ENCODE measurements at regions of chr16 and their contacts with region 1.

Region 1: DNA sequence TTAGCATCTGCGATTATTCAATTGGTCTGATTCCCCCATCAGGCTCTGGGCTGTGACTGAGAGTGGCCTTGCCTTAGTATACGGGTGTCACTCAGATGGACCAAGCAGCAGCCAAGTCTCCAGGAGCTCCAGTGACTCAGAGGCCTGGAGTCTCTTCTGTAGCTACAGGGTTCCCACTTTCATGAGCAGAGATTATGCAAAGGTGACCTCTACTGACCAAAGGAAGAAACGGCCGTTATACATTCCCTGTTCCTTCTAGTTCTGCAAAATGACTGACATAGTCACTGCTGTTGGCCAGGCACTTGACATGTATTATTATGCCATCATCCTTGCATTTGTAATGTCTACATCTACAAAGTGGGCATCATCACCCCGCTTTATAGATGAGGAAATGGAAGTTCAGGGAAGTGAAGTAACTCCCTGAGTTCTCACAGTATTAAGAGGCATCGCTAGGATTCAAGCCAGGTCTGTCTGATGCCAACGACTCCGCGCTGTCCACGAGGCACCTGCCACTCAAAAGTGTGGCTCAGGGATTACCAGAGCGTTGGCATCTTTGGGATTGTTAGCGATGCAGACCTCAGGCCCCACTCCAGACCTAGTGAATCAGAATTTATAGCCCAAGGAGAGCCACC is 23.3 kb downstream of the SLC38A7 start:
- DNase-seq: peak; percentile 85
- ATAC-seq: peak; percentile 99
- H3K4me3 ChIP-seq: no peak overlapping the region
- H3K27ac ChIP-seq: no peak overlapping the region
- H3K4me1 ChIP-seq: no peaks in the 10 kb centered on the region
- H3K27me3 ChIP-seq: no peaks in the 10 kb centered on the region
- CTCF ChIP-seq: peak; percentile 74

Region 2: GRCh38 chr16:58336332-58337089 is 324.8 kb before region 1 on chr16:
- CTCF ChIA-PET with region 1: no interaction called
- POLR2A ChIA-PET with region 1: no interaction called
- intact Hi-C with region 1: loop called (anchors 10 kb)
- DNase-seq: peak; percentile 87
- ATAC-seq: peak; percentile 90
- H3K4me3 ChIP-seq: peak overlapping the region; percentile 61
- H3K27ac ChIP-seq: no peak overlapping the region
- H3K4me1 ChIP-seq: peaks cover 5% of the 10 kb centered on the region
- H3K27me3 ChIP-seq: no peaks in the 10 kb centered on the region
- CTCF ChIP-seq: peak; percentile 85

Region 3: DNA sequence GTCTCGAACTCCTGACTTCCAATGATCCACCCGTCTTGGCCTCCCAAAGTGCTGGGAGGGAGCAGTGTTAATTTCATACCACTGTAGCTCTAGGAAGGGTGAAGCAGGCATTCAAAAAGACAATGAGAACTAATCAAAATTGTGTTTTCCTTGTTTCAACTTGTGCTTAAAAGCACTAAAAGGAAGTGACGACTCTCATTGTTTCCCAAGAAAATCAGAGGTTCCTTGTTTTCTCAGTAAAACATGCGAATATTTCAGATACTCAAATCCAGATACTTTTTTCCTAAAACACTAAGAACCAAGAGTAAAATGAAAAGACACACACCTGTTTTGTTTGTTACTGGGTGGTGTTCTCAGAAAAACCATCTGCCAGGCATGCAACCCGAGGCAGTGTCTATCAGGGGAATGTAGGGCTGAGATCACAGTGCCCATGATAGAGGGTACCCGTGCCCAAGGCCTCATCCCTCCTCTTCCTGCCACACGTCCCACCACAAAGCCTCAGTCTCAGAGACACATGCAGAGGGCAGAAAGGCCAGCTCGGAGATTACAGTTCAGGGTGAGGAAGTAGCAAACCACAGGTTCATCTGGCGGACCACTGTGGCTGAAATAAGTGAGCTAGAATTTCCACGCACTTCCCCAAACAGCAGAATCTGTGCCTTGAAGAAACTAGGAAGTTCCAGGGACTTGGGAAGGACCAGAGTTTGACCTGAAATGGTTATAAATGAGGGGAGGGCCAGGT is 235.4 kb before region 1 on chr16:
- CTCF ChIA-PET with region 1: interaction called, 13 read pairs
- POLR2A ChIA-PET with region 1: no interaction called
- intact Hi-C with region 1: no loop called
- DNase-seq: no peak
- ATAC-seq: no peak
- H3K4me3 ChIP-seq: no peak overlapping the region
- H3K27ac ChIP-seq: no peak overlapping the region
- H3K4me1 ChIP-seq: peaks cover 11% of the 10 kb centered on the region
- H3K27me3 ChIP-seq: no peaks in the 10 kb centered on the region
- CTCF ChIP-seq: no peak

Region 4: GRCh38 chr16:58499615-58500351 is 161.5 kb before region 1 on chr16 and contains the start of gene NDRG4:
- CTCF ChIA-PET with region 1: interaction called, 20 read pairs
- POLR2A ChIA-PET with region 1: interaction called, 8 read pairs
- intact Hi-C with region 1: no loop called
- DNase-seq: peak; percentile 86
- ATAC-seq: peak; percentile 84
- H3K4me3 ChIP-seq: peak within 1 kb of the TSS; percentile 70
- H3K27ac ChIP-seq: no peak within 1 kb of the TSS
- H3K4me1 ChIP-seq: peaks cover 7% of the 10 kb centered on the region; the same call in 1 of the 2 replicates
- H3K27me3 ChIP-seq: no peaks in the 10 kb centered on the region
- CTCF ChIP-seq: no peak
- total RNA-seq, gene NDRG4: 14.2 and 26.6 TPM in 2 replicates

Region 5: DNA sequence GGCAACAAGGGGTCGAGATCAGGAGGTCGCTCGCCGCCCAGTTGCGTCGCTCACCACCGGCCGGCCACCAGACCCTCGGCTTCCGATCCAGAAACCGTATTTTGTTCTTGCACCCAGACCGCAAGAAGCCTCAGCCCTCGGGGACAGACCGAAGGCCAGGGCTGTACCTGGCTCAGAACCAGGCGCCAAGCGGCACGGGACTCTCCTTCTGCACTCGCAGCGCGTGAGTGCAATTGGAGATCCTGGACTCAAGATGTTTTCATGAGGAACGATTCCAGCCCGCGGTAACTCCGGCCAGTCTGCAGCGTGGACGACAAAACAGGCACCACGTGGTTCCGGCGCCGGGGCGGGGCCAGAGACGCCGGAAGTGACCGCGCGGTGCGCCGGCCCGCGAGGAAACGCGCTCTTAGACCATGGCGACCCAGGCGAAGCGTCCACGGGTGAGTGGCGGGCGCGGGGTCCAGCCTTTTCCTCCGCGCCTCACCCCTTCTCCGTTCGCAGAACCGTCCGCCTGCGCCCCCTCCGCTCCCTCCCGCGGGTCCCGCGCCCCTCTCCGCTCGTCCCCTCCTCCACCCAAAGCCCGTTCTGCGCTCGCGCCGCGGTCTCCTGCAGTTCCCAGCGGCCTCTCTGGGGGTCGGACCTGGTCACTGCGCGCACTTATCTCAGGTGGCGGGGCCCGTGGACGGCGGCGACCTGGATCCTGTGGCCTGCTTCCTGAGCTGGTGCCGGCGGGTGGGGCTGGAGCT is 146.0 kb before region 1 on chr16 and contains the start of gene SETD6:
- CTCF ChIA-PET with region 1: interaction called, 15 read pairs
- POLR2A ChIA-PET with region 1: no interaction called
- intact Hi-C with region 1: loop called (anchors 1 kb)
- DNase-seq: peak; percentile 80
- ATAC-seq: peak; percentile 85
- H3K4me3 ChIP-seq: peak within 1 kb of the TSS; percentile 74
- H3K27ac ChIP-seq: peak within 1 kb of the TSS; percentile 36
- H3K4me1 ChIP-seq: peaks cover 8% of the 10 kb centered on the region
- H3K27me3 ChIP-seq: no peaks in the 10 kb centered on the region
- CTCF ChIP-seq: no peak
- total RNA-seq, gene SETD6: 22.0 and 22.5 TPM in 2 replicates

Region 6: DNA sequence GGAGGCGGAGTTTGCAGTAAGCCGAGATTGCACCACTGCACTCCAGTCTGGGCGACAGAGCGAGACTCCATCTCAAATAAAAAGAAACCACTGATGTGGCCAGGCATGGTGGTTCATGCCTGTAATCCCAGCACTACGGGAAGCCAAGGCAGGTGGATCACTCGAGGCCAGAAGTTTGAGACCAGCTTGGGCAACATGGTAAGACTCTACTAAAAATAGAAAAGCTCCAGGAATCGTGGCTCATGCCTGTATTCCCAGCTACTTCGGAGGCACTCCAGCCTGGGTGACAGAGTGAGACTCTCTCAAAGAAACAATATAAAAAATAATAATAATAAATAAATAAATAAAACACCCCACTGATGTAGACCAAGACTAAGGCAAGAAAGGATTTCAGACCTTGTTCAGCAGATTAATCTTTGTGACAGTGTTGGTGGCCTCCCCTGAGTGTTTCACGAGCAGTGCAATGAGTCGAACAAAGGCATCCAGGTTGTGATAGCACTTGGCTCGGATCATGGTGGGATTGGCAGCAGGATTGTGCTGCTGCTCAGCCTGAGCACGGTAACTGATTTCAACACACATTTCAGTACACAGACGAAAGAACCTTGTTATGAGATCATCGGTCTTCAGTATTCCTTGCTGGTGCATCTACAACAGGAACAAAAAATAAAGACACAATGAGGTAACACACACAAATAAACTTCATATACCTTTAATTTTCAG is 127.4 kb before region 1 on chr16:
- CTCF ChIA-PET with region 1: interaction called, 12 read pairs
- POLR2A ChIA-PET with region 1: no interaction called
- intact Hi-C with region 1: no loop called
- DNase-seq: no peak
- ATAC-seq: no peak
- H3K4me3 ChIP-seq: no peak overlapping the region
- H3K27ac ChIP-seq: no peak overlapping the region
- H3K4me1 ChIP-seq: no peaks in the 10 kb centered on the region
- H3K27me3 ChIP-seq: no peaks in the 10 kb centered on the region
- CTCF ChIP-seq: no peak

Region 7: DNA sequence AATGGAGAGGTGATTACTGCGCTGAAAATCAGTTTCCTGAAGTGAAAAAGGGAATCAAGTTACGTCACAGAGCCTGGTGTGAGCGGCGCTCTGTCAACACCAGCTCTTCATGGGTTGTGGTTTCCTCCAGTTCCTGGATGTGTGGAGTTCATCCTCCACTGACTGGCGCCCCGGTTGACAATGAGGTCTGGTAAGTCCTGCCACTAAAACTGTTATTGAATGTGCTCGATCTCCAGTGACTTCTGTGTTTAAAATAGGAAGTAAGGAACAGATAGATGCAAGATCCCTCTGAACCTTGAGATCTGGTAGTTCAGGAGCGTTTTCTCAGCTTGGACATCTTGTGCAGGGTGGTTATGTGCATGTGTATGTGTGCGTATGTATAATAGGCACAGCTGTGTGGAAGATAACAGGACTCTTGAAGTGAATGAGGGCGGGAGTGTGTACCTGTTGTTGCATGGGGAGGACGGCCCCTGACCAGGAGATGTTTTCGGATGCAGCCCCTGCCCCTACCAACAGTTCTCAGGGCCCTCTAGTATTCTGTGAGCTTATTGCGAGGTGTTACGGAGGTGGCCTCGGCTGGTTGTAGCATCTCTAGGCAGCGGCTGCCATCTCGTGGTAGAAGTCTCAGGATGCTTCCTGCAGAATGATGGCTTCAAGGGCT is 94.8 kb after region 1 on chr16:
- CTCF ChIA-PET with region 1: interaction called, 10 read pairs
- POLR2A ChIA-PET with region 1: no interaction called
- intact Hi-C with region 1: no loop called
- DNase-seq: peak; percentile 74
- ATAC-seq: peak; percentile 98
- H3K4me3 ChIP-seq: no peak overlapping the region
- H3K27ac ChIP-seq: no peak overlapping the region
- H3K4me1 ChIP-seq: no peaks in the 10 kb centered on the region
- H3K27me3 ChIP-seq: no peaks in the 10 kb centered on the region; the same call in 1 of the 2 replicates
- CTCF ChIP-seq: peak; percentile 71

Measured in PC-3 (cell line).